GM10248 (cell line): ENCODE measurements at regions of chr4 and their contacts with region 1.

Region 1: GRCh38 chr4:48380583-48381167 is 39.3 kb downstream of the SLAIN2 start:
- DNase-seq: no peak
- CTCF ChIP-seq: no peak

Region 2: DNA sequence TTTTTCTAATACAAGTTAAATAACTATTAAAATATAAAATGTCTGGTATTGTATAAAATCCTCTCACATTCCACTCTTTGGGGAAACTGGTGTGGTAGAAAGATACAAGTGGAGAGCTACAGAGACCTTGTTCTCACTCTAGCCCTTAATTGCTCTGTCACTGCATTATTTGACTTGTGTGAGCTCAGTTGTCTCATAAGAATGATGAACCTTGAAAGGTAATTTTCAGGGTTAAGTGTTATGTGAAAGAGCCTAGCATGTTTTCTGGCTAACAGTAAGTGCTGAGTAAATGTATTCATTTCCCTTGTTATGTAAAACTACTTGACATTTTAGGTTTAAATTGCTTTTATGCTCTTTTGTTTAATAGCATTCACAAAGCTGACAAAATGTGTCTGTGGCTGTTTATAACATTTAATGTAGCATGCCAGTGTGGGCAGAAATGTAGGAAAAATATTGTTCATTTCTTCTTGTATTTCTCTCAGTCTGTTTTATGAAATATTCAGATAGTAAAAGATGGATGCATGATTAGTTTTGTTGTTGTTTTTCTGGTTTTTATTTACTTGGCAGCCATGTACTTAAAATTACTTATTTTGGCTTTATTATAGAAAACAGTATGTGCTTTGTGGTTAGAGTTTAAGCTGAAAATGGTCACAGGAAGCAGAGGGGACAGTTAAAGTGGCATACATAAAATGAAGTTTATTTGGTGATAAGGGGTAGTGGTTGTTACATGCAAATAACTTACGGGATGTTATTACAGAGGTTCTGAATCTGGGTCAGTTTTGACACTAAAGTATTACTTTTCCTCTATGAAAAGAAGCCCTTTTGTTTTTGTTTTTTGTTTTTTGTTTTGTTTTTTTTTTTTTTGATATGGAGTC is 10.2 kb before region 1 on chr4:
- CTCF ChIA-PET with region 1: interaction called, 12 read pairs
- POLR2A ChIA-PET with region 1: no interaction called
- DNase-seq: no peak
- CTCF ChIP-seq: no peak